GM12878 (cell line): ENCODE measurements at regions of chr16 and their contacts with region 1.

Region 1: DNA sequence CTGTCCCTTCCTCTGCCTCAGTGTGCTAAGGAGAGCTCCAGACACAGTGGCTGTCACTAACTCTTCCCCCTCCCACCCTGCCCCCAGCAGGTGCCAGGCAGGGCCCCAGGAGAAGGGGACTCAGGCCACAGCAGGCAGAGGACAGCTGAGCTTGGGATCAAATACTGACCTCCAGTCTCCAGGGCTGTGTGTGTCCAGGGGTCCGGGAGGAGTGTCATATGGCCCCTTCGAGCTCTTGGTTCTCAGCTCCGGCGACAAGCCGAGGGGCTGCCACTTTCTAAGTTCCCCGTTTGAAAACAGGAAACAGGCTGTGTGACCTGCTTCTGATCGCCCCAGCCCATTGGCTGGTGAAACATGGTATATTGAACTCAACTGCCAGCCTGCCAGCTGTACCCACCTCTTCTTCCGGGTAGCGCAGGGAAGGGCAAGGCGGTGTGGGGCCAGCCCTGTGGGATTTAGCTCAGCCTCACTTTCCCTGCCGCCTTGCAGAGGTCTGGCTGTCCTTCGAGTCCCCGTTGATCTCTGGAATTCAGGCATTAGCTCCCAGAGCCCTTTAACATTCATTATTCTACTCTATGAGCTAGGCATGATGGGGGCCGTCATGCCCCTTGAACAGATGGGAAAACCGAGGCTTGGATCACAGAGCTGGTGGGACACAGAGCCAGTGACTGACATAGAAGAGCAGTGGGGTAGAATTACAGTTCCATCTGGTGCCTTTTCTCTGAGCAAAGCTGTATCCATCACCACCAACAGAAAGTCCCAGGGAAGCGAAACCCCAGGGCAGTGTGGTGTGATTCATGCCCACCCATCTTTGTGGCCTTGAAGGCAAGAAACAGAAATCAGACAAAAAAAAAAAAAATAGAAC is at the start of gene SNX20:
- DNase-seq: peak; percentile 63
- ATAC-seq: peak; percentile 65
- H3K4me3 ChIP-seq: peak within 1 kb of the TSS; percentile 72
- H3K27ac ChIP-seq: peak within 1 kb of the TSS; percentile 84
- H3K4me1 ChIP-seq: peaks cover 50% of the 10 kb centered on the region
- H3K27me3 ChIP-seq: no peaks in the 10 kb centered on the region
- CTCF ChIP-seq: no peak
- EP300 ChIP-seq: no peak
- POLR2A ChIP-seq: peak; percentile 68
- RAD21 ChIP-seq: no peak
- polyA plus RNA-seq, gene SNX20: 4.6 to 6.9 TPM

Region 2: DNA sequence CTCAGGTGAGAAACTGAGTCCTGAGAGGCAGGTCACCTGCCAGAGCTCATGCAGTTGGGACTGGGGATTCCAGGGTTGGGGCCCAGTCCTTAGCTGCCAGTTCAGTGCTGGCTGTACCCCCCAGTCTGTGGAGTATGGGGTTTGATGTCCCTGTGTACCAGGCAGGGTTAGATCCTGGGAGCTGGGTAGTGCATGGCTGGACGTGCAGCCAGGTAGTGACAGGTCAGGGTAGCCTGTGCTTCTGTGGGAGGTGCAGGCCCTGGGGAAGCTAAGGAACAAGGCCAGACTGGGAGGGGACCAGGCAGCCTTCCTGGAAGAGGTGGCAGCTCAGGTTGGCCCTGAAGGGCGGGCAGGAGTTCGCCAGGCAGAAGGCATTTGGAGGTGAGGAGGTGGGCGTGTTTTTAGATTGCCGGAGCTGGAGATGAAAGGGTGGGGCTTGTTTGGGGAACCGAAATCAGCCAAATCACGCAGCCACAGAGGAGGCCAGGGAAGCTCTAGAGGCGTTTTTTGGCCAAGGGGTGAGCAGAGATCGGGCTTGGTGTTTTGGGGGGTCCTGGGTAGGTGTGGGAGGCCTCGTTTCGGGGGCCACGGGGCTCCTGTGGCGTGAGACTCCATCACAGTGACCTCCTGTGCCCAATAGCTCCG is 407.4 kb before region 1 on chr16:
- CTCF ChIA-PET with region 1: interaction called, 4 read pairs
- POLR2A ChIA-PET with region 1: no interaction called
- RAD21 ChIA-PET with region 1: interaction called, 3 read pairs
- SMC1A ChIA-PET with region 1: no interaction called
- in situ Hi-C with region 1: no loop called
- intact Hi-C with region 1: loop called (anchors 5 kb)
- DNase-seq: peak; percentile 64
- ATAC-seq: peak; percentile 80
- H3K4me3 ChIP-seq: peak overlapping the region; percentile 70
- H3K27ac ChIP-seq: peak overlapping the region; percentile 93
- H3K4me1 ChIP-seq: peaks cover 49% of the 10 kb centered on the region
- H3K27me3 ChIP-seq: no peaks in the 10 kb centered on the region
- CTCF ChIP-seq: no peak
- EP300 ChIP-seq: peak in 1 of 2 experiments; percentile 47; a peak in 2 of 4 replicates
- POLR2A ChIP-seq: peak; percentile 59
- RAD21 ChIP-seq: no peak

Region 3: GRCh38 chr16:50497592-50497991 is 183.7 kb before region 1 on chr16:
- CTCF ChIA-PET with region 1: no interaction called
- POLR2A ChIA-PET with region 1: no interaction called
- RAD21 ChIA-PET with region 1: no interaction called
- SMC1A ChIA-PET with region 1: no interaction called
- in situ Hi-C with region 1: no loop called
- intact Hi-C with region 1: no loop called
- DNase-seq: no peak
- ATAC-seq: no peak
- H3K4me3 ChIP-seq: no peak overlapping the region
- H3K27ac ChIP-seq: no peak overlapping the region
- H3K4me1 ChIP-seq: no peaks in the 10 kb centered on the region
- H3K27me3 ChIP-seq: no peaks in the 10 kb centered on the region
- CTCF ChIP-seq: no peak
- EP300 ChIP-seq: no peak
- POLR2A ChIP-seq: no peak
- RAD21 ChIP-seq: no peak

Region 4: GRCh38 chr16:50735629-50736122 is 54.4 kb after region 1 on chr16:
- CTCF ChIA-PET with region 1: interaction called, 6 read pairs
- POLR2A ChIA-PET with region 1: interaction called, 18 read pairs
- RAD21 ChIA-PET with region 1: interaction called, 7 read pairs
- SMC1A ChIA-PET with region 1: interaction called, 28 read pairs
- in situ Hi-C with region 1: no loop called
- intact Hi-C with region 1: no loop called
- DNase-seq: peak; percentile 81
- ATAC-seq: peak; percentile 74
- H3K4me3 ChIP-seq: no peak overlapping the region
- H3K27ac ChIP-seq: peak overlapping the region; percentile 55
- H3K4me1 ChIP-seq: peaks cover 26% of the 10 kb centered on the region
- H3K27me3 ChIP-seq: no peaks in the 10 kb centered on the region
- CTCF ChIP-seq: no peak
- EP300 ChIP-seq: peak; percentile 68 to 83; a peak in 3 of 4 replicates
- POLR2A ChIP-seq: no peak
- RAD21 ChIP-seq: no peak

Region 5: DNA sequence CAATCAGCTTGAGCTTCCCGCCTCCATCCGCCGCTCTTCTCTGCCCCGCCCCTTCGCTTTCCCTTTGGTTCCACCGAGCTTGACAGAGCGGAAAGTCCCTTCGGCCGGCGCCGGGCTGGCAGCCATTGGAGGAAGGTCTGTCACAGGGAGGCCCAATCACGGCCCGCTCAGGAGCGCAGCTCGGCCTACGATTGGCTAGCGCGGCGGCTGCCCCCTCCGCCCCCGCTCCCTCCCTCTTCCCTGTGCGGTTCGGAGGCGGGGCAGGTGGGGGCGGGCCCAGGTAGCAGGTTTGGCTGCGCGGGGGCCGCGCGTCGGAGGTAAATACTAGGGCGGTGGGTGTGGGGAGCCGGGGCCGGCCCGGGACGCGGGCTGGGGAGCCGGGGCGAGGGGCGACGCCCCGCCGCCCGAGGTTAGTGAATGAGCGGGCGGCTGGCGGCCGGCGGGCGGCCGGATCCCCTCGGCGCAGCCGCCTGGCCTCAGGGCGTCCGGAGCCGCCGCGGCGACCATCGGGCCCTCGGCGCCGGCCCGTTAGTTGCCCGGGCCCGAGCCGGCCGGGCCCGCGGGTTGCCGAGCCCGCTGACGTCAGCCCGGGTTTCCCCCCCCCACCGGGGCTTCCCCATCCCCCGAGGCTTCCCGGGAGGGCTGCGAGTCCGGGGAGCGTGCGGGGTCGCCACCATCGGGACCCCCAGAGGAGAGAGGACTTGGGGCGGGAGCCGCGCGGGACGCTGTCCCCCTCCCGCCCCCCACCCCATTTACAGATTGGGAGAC is 60.7 kb after region 1 on chr16 and contains the start of gene CYLD:
- CTCF ChIA-PET with region 1: interaction called, 636 read pairs
- POLR2A ChIA-PET with region 1: interaction called, 42 read pairs
- RAD21 ChIA-PET with region 1: interaction called, 578 read pairs
- SMC1A ChIA-PET with region 1: interaction called, 600 read pairs
- in situ Hi-C with region 1: no loop called
- intact Hi-C with region 1: loop called (anchors 1 kb)
- DNase-seq: peak; percentile 95
- ATAC-seq: peak; percentile 95
- H3K4me3 ChIP-seq: peak within 1 kb of the TSS; percentile 84
- H3K27ac ChIP-seq: peak within 1 kb of the TSS; percentile 98
- H3K4me1 ChIP-seq: peaks cover 21% of the 10 kb centered on the region
- H3K27me3 ChIP-seq: no peaks in the 10 kb centered on the region
- CTCF ChIP-seq: no peak
- EP300 ChIP-seq: no peak
- POLR2A ChIP-seq: peak; percentile 36
- RAD21 ChIP-seq: no peak
- polyA plus RNA-seq, gene CYLD: 19.2 to 27.0 TPM